Ovary (tissue), 10 donors: ENCODE measurements at regions of chr3 and their contacts with region 1.

Region 1: DNA sequence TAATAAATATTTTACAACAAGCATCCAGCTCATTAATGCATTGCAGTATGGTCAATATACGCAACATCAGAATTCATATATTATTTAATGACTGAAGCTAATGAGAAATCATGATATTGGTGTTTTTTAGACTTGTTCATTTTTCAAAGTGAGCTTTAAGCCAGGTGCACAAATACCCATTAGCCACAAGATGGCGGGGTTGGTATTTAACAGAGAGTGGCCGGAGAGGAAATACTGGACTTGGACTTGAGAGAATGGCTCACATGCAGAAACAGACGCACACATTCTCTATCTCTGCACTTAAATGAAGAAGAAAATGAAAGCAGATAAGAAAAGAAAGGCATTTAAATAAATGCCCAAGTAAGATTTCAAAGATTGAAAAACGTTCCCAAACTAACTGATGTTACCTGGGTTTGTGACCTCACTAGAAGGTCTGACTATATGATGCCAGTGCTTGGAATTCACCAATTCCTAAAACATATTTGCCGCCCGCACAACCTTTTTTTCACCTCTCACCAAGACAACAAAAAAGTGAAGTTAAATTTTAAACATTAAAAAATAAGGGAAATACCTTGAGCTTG is 21.2 kb upstream of the CRBN start:
- DNase-seq: peak in 4 of 5 donors; percentile 24 to 42 (median 34)
- H3K4me3 ChIP-seq: no peak overlapping the region
- H3K27ac ChIP-seq: no peak overlapping the region
- H3K4me1 ChIP-seq: no peaks in the 10 kb centered on the region
- H3K27me3 ChIP-seq: no peaks in the 10 kb centered on the region
- CTCF ChIP-seq: peak; percentile 27 to 68 (median 34)
- EP300 ChIP-seq: no peak
- POLR2A ChIP-seq: no peak

Region 2: GRCh38 chr3:3013317-3014052 is 187.2 kb before region 1 on chr3:
- intact Hi-C with region 1: no loop called
- DNase-seq: no peak
- H3K4me3 ChIP-seq: no peak overlapping the region
- H3K27ac ChIP-seq: no peak overlapping the region
- H3K4me1 ChIP-seq: peaks cover 2% of the 10 kb centered on the region
- H3K27me3 ChIP-seq: no peaks in the 10 kb centered on the region
- CTCF ChIP-seq: no peak
- EP300 ChIP-seq: no peak
- POLR2A ChIP-seq: no peak

Region 3: DNA sequence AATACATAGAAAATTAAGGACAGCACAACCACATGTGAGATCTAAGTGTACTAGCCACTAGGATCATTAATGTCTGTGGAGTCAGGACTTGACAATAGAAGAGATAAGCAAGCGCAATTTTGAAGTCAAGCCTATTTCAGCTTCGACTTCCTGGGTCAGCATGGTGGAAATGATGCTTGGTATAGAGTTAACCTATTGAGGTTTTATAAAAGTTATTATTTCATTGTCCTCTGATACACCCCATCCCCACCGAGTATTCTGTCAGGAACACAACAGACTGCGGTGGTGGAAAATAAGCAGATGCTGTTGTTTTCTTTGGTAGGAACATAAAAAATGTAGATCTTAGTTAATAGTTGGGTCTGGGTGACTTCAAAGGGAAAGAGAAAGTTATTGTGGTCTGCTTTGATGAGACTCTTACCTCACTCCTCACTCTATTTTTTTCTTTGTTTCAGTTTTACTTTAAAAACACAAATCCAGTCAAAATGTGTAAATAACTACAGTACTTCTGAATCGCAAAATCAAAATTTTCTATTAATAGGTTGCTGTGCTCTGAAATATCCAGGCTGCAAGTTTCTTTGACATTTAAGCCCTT is 172.7 kb before region 1 on chr3:
- intact Hi-C with region 1: no loop called
- DNase-seq: no peak
- H3K4me3 ChIP-seq: no peak overlapping the region
- H3K27ac ChIP-seq: no peak overlapping the region
- H3K4me1 ChIP-seq: no peaks in the 10 kb centered on the region
- H3K27me3 ChIP-seq: no peaks in the 10 kb centered on the region
- CTCF ChIP-seq: no peak
- EP300 ChIP-seq: no peak
- POLR2A ChIP-seq: no peak

Region 4: DNA sequence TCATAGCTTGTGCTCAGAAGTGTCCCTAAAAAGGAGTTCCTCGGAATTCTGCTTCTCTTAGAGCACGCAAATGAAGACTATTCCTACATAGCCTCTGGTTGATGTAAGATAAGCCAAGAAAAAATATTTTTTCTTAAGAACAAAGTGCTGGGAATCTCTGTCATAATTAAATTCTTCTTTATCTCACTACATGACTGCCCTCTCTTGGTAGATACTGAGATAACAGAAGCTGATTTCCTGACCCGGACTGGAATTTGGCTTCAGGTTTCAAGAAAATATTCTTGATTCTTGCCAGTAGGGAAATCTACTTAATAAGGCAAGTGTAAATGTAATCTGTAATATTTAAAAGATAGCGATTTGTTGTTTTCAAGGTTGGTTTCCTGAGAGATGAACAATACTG is 1071.1 kb after region 1 on chr3:
- intact Hi-C with region 1: loop called in 1 of 4 experiments (anchors 10 kb)
- DNase-seq: no peak
- H3K4me3 ChIP-seq: no peak overlapping the region
- H3K27ac ChIP-seq: no peak overlapping the region
- H3K4me1 ChIP-seq: peaks cover 2% of the 10 kb centered on the region
- H3K27me3 ChIP-seq: no peaks in the 10 kb centered on the region
- CTCF ChIP-seq: no peak
- EP300 ChIP-seq: no peak
- POLR2A ChIP-seq: no peak

Region 5: DNA sequence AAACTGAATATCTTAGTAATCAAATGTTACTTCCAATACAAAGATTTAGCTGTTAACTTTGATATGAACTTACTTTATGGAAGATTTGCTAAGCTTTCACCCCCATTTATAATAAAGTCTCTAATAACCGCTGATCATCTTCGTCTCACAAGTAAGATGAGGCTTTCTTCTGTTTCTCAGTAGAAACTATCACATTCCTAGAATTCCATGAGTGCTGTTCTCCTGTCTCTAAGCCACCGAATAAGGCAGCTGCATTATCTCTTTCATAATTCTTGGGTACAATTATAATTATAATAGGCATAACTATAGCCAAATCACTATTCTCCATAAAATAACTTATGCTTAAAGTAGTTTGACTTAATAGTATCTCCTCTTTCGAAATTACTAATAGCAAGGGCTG is 1084.1 kb after region 1 on chr3:
- intact Hi-C with region 1: loop called in 3 of 4 experiments (anchors 5 to 10 kb)
- DNase-seq: no peak
- H3K4me3 ChIP-seq: no peak overlapping the region
- H3K27ac ChIP-seq: no peak overlapping the region
- H3K4me1 ChIP-seq: no peaks in the 10 kb centered on the region
- H3K27me3 ChIP-seq: no peaks in the 10 kb centered on the region
- CTCF ChIP-seq: no peak
- EP300 ChIP-seq: no peak
- POLR2A ChIP-seq: no peak

Region 6: GRCh38 chr3:4290272-4290893 is 1089.7 kb after region 1 on chr3:
- intact Hi-C with region 1: loop called in 3 of 4 experiments (anchors 5 to 10 kb)
- DNase-seq: peak in 1 of 5 donors; percentile 49
- H3K4me3 ChIP-seq: no peak overlapping the region
- H3K27ac ChIP-seq: no peak overlapping the region
- H3K4me1 ChIP-seq: peaks cover 3% of the 10 kb centered on the region
- H3K27me3 ChIP-seq: no peaks in the 10 kb centered on the region
- CTCF ChIP-seq: peak; percentile 54 to 88 (median 65)
- EP300 ChIP-seq: no peak
- POLR2A ChIP-seq: no peak